ENCODE measurements at regions of chr19 and their contacts with region 1.

Region 1: DNA sequence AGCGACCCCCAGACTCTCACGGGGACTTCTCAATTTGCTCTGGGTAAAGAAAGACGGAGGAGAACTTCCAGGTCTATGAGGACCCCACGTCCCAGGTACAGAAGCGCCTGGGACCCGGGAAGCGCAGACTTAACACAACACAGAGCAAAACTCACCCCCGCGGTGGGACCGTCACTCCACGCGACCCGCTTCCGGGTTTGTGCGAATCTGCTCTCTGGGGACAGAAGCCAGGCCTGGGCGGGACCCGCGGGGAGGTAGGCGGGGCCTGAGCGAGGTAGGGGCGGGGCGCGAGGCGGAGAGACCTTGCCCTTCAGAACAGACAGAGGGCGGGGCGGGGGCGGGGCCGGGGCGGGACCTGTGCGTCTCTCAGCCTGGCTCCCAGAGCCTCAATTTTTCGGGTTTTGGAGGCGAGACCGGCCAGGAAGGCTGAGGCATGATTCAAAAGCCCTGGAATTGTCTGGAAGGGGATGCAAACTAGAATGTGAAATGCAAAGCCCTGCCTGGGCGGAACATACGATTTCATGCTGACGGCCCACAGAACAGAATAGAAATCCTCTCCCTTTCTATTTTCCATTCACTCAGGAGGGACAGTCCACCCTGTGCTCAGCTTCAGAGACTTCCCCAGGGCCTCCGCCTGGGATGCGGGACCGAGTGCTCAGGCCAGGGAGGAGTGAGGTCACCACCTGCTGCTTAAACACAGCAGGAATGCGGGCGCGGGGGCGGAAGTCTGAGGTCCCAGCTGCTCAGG is 19.3 kb upstream of the ZNF888 start:
- DNase-seq: peak; percentile 87 to 89 (median 88)
- H3K4me3 ChIP-seq: peak overlapping the region; percentile 75 to 99 (median 91)
- H3K4me3 Mint-ChIP-seq: peak overlapping the region; percentile 95 to 100
- H3K27ac ChIP-seq: peak overlapping the region; percentile 47 to 92
- H3K27ac Mint-ChIP-seq: peak overlapping the region; percentile 84 to 95 (median 93)
- H3K4me1 ChIP-seq: peaks cover 25 to 42% of the 10 kb centered on the region in 2 donors
- H3K4me1 Mint-ChIP-seq: peaks cover 47% of the 10 kb centered on the region
- H3K27me3 ChIP-seq: no peaks in the 10 kb centered on the region
- H3K27me3 Mint-ChIP-seq: peaks cover 3 to 10% (median 9%) of the 10 kb centered on the region in 3 donors
- CTCF ChIP-seq: no peak

Region 2: DNA sequence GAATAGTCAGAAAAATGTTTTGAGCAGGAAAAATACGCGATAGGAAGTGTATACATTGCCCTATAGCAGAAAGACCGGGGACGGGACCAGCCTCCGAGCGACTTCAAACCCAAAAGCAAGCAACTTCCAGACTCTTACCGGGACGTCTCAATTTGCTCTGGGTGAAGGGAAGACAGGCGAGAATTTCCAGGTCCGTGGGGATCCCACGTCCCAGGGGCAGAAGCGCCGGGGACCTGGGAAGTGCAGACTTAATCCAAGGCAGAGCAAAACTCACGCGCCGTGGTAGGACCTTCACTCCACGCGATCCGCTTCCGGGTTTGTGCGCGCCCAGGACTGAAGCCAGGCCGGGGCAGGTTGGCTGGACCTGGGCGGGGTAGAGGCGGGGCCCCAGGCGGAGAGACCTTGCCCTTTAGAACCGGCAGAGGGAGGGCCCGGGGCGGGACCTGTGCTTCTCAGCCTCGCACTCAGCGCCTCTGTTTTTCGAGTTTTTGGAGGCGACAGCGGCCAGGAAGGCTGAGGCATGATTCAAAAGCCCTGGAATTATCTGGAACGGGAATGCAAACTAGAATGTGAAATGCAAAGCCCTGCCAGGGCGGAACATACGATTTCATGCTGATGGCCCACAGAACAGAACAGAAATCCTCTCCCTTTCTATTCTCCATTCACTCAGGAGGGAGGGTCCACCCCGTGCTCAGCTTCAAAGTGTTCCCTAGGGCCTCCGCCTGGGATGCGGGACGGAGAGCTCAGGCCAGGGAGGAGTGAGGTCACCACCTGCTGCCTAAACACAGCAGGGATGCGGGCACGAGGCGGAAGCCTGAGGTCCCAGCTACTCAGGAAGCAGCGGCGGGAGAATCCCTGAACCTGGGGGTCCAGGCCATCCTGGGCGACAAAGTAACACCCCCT is 155.9 kb before region 1 on chr19 and contains the start of gene ZNF600:
- intact Hi-C with region 1: loop called in 1 of 2 experiments (anchors 10 kb)
- DNase-seq: peak; percentile 58 to 73 (median 63)
- H3K4me3 ChIP-seq: peak within 1 kb of the TSS; percentile 47 to 88 (median 73)
- H3K4me3 Mint-ChIP-seq: peak within 1 kb of the TSS; percentile 95 to 96
- H3K27ac ChIP-seq: peak within 1 kb of the TSS; percentile 27 to 68
- H3K27ac Mint-ChIP-seq: peak within 1 kb of the TSS; percentile 58 to 91 (median 75)
- H3K4me1 ChIP-seq: peaks cover 13 to 14% of the 10 kb centered on the region in 2 donors
- H3K4me1 Mint-ChIP-seq: peaks cover 30% of the 10 kb centered on the region
- H3K27me3 ChIP-seq: no peaks in the 10 kb centered on the region
- H3K27me3 Mint-ChIP-seq: peaks cover 2 to 11% (median 8%) of the 10 kb centered on the region in 3 donors
- CTCF ChIP-seq: peak; percentile 26
- polyA plus RNA-seq, gene ZNF600: 1.9 to 9.2 (median 2.5) TPM

Region 3: GRCh38 chr19:52922841-52923777 is 19.5 kb before region 1 on chr19 and contains the start of gene ZNF888:
- intact Hi-C with region 1: loop called in 1 of 2 experiments (anchors 2 kb)
- DNase-seq: peak; percentile 82 to 85 (median 83)
- H3K4me3 ChIP-seq: peak within 1 kb of the TSS; percentile 62 to 89 (median 87)
- H3K4me3 Mint-ChIP-seq: peak within 1 kb of the TSS; percentile 93 to 96
- H3K27ac ChIP-seq: peak within 1 kb of the TSS; percentile 83 to 87
- H3K27ac Mint-ChIP-seq: peak within 1 kb of the TSS; percentile 93 to 98 (median 95)
- H3K4me1 ChIP-seq: peaks cover 24 to 29% of the 10 kb centered on the region in 2 donors
- H3K4me1 Mint-ChIP-seq: peaks cover 34% of the 10 kb centered on the region
- H3K27me3 ChIP-seq: no peaks in the 10 kb centered on the region
- H3K27me3 Mint-ChIP-seq: peaks cover 0 to 1% (median 0%) of the 10 kb centered on the region in 3 donors
- CTCF ChIP-seq: no peak
- polyA plus RNA-seq, gene ZNF888: 0.71 to 1.7 (median 1.4) TPM

Measured in CD14-positive monocyte (primary cell).